A549 (cell line): ENCODE measurements at regions of chr1 and their contacts with region 1.

Region 1: DNA sequence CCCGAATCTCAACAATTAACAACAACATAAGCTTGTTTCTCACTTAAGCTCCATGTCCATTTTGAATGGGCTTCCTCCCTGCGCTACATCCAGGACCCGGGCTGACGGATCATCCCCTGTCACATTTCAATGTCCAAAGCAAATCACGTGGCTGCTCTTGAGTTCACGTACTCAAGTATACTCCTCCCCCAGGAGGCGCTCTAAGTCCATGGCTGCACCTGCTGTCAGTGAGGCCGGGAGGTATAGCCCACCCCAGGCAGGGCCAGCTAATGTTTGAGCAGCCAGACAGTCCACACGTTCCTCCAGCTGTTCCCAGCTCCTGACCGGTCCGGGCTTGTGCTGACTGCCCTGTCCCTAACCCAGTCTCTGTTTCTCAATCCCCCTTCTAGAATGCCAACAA is 220.8 kb downstream of the SLC35F3 start:
- DNase-seq: peak in 1 of 2 experiments; percentile 72
- ATAC-seq: peak; percentile 73 to 94; a peak in 5 of 6 replicates
- H3K4me3 ChIP-seq: no peak overlapping the region
- H3K27ac ChIP-seq: peak overlapping the region in 1 of 2 experiments; percentile 38; a peak in 2 of 6 replicates
- H3K4me1 ChIP-seq: peaks cover 28% of the 10 kb centered on the region
- CTCF ChIP-seq: peak; percentile 44
- EP300 ChIP-seq: no peak
- POLR2A ChIP-seq: no peak
- RAD21 ChIP-seq: peak; percentile 69 to 79

Region 2: DNA sequence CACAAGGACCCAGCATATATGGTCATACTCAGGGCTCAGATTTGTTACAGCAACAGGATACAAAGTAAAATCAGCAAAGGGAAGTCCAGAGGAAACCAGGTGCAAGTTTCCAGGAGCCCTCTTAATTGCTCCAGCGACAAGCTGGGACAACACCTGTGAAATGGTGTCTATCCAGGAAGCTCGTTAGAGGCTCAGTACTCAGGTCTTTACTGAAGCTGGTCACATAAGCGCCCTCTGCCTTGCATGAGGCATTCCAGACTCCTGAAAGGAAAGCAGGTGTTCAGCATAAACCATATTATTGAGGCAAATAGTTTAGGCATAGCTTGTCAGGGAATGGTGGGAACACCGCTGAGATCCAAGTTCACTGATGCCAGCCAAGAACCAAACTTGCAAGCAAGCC is 10.2 kb after region 1 on chr1:
- CTCF ChIA-PET with region 1: interaction called, 25 read pairs
- POLR2A ChIA-PET with region 1: no interaction called
- DNase-seq: no peak
- ATAC-seq: no peak
- H3K4me3 ChIP-seq: no peak overlapping the region
- H3K27ac ChIP-seq: peak overlapping the region in 1 of 2 experiments; percentile 88; a peak in 4 of 6 replicates
- H3K4me1 ChIP-seq: peaks cover 37% of the 10 kb centered on the region
- CTCF ChIP-seq: no peak
- EP300 ChIP-seq: no peak
- POLR2A ChIP-seq: no peak
- RAD21 ChIP-seq: no peak

Region 3: GRCh38 chr1:234186037-234186688 is 60.9 kb after region 1 on chr1:
- CTCF ChIA-PET with region 1: no interaction called
- POLR2A ChIA-PET with region 1: no interaction called
- DNase-seq: peak; percentile 69 to 86
- ATAC-seq: peak; percentile 94 to 95
- H3K4me3 ChIP-seq: no peak overlapping the region
- H3K27ac ChIP-seq: peak overlapping the region; percentile 67 to 84
- H3K4me1 ChIP-seq: peaks cover 29% of the 10 kb centered on the region
- CTCF ChIP-seq: no peak
- EP300 ChIP-seq: peak; percentile 71 to 90; a peak in 4 of 5 replicates
- POLR2A ChIP-seq: no peak
- RAD21 ChIP-seq: peak; percentile 22 to 38; a peak in 2 of 5 replicates